Tibial artery (tissue), 4 donors: ENCODE measurements at regions of chr13 and their contacts with region 1.

Region 1: DNA sequence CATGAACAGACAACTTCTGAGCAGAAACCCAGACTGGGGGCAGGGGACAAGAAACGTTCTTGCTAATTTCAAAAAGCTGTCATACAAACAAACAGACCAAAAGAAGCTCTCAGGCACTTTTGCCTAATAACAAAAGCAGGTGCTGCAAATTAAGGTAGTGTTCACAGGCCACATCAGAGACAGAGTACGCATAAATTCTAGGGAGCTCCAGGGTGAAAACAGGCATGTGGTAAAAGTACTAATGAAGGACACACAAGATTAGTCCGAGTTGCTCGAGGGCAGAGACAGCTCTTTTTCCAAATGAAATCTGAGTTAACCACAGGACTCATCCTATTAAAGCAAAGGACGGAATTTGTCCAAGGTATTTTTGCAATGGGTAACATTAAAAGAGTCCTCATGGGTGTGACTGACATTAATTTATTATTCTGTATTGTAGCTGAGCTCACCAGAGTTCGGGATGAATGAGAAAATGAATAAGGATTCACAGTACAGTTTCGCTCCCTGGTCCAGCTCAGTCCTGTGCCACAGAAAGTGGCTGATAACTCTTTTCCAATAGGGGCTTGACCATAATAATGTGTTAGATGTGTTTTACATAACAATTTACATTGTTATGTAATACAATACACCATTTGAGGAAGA is 197.3 kb downstream of the LHFPL6 start:
- DNase-seq: no peak
- H3K4me3 ChIP-seq: no peak overlapping the region
- H3K27ac ChIP-seq: no peak overlapping the region
- H3K4me1 ChIP-seq: peaks cover 0 to 34% (median 6%) of the 10 kb centered on the region in 4 donors
- H3K27me3 ChIP-seq: no peaks in the 10 kb centered on the region
- CTCF ChIP-seq: no peak

Region 2: DNA sequence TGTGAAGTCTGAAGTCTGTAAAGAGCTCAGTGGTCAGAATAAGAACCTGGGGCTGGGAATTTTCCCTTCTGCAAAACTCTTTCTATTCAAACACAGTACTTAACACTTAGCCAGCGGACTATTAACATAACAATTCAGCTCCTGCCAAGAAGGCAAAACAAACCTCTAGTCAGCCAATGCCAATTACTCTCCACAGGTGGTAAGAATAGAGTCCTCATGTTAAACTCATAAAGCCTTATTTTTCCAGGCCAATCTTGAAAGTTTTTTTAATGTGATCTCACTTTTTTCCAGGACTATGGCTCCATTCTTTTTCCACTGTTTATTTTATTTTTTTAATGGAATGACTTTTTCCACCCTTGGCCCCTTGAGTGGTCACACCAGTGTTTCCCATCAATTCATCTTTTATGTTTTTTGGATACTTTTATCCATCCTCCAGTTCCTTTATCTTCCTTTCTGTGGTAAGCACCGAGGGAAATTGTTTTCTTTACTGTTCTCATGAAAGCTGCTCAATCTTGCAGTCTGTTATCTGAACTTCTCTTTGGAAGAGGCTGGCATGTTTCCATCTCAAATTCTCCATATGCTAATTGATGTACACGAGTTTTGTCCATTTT is 20.0 kb before region 1 on chr13:
- intact Hi-C with region 1: loop called (anchors 1 kb)
- DNase-seq: no peak
- H3K4me3 ChIP-seq: no peak overlapping the region
- H3K27ac ChIP-seq: peak overlapping the region; percentile 1 to 44
- H3K4me1 ChIP-seq: peaks cover 0 to 29% (median 17%) of the 10 kb centered on the region in 4 donors
- H3K27me3 ChIP-seq: no peaks in the 10 kb centered on the region
- CTCF ChIP-seq: no peak

Region 3: GRCh38 chr13:41289463-41289881 is 1883.8 kb after region 1 on chr13:
- intact Hi-C with region 1: no loop called
- DNase-seq: no peak
- H3K4me3 ChIP-seq: no peak overlapping the region
- H3K27ac ChIP-seq: no peak overlapping the region
- H3K4me1 ChIP-seq: no peaks in the 10 kb centered on the region
- H3K27me3 ChIP-seq: no peaks in the 10 kb centered on the region
- CTCF ChIP-seq: no peak